Common myeloid progenitor, CD34-positive (primary cell): ENCODE measurements at regions of chr12 and their contacts with region 1.

Region 1: DNA sequence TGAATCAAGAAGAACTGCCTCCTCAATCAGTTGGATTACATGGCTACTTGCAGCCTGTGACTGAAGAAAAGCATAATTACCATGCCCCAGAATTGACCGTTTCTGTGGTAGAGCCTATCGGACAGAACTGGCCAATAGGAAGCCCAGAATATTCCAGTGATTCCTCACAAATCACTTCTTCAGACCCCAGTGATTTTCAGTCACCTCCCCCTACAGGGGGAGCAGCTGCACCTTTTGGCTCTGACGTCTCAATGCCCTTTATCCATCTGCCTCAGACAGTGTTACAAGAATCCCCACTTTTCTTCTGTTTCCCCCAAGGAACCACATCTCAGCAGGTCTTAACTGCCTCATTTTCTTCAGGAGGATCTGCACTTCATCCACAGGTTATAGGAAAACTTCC is 80.8 kb downstream of the RAD52 start:
- DNase-seq: peak; percentile 8 to 16 (median 9)
- H3K4me3 ChIP-seq: no peak overlapping the region
- H3K27ac ChIP-seq: no peak overlapping the region
- H3K4me1 ChIP-seq: no peaks in the 10 kb centered on the region
- H3K27me3 ChIP-seq: no peaks in the 10 kb centered on the region

Region 2: GRCh38 chr12:188910-189621 is 679.7 kb before region 1 on chr12:
- CTCF ChIA-PET with region 1: no interaction called
- POLR2A ChIA-PET with region 1: no interaction called
- DNase-seq: peak; percentile 61 to 75 (median 73)
- H3K4me3 ChIP-seq: peak overlapping the region in 6 of 7 experiments; percentile 33 to 72 (median 54)
- H3K27ac ChIP-seq: no peak overlapping the region
- H3K4me1 ChIP-seq: peaks cover 0 to 24% (median 19%) of the 10 kb centered on the region in 4 experiments
- H3K27me3 ChIP-seq: peaks cover 0 to 2% (median 0%) of the 10 kb centered on the region in 5 experiments

Region 3: GRCh38 chr12:884746-885414 is 16.2 kb after region 1 on chr12:
- CTCF ChIA-PET with region 1: interaction called, 12 read pairs
- POLR2A ChIA-PET with region 1: no interaction called
- DNase-seq: no peak
- H3K4me3 ChIP-seq: no peak overlapping the region
- H3K27ac ChIP-seq: no peak overlapping the region
- H3K4me1 ChIP-seq: no peaks in the 10 kb centered on the region
- H3K27me3 ChIP-seq: no peaks in the 10 kb centered on the region

Region 4: GRCh38 chr12:920676-921075 is 52.0 kb after region 1 on chr12:
- CTCF ChIA-PET with region 1: no interaction called
- POLR2A ChIA-PET with region 1: no interaction called
- DNase-seq: no peak
- H3K4me3 ChIP-seq: no peak overlapping the region
- H3K27ac ChIP-seq: no peak overlapping the region
- H3K4me1 ChIP-seq: peaks cover 0 to 13% (median 5%) of the 10 kb centered on the region in 4 experiments
- H3K27me3 ChIP-seq: no peaks in the 10 kb centered on the region